Transverse colon (tissue), 4 donors: ENCODE measurements at regions of chr20 and their contacts with region 1.

Region 1: DNA sequence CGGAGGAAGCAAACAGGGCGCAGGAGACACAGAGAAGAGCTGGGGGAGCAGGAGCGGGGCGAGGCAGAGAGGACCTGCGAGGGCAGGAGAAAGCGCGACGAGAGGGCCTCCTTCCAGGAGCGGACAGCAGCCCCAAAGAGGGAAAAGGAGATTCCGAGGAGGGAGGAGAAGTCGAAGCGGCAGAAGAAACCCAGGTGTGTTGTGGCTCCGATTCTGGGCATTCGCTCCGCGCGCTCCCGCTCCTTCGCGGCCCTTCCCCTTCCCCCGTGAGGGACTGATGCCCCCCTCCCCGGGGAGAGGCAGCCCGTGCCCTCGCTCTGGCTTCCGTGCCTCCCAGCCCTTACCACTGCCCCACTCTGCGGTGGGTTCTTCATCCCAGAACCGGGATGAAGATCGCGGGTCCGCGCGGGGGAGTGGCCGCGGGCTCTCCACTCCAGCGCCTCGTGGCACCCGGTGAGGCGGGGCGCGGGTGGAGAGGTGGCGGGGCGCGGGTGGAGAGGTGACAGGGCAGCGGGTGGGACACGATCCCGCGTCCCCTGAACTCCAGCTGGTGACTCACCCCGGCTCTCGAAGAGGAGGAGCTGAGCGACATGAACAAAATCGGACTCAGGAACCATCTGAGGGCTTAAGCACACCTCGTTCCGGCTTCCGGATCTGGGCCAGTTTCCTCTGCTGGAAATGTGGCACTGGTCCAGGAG is 22.4 kb downstream of the TMC2 start:
- DNase-seq: no peak
- H3K4me3 ChIP-seq: peak overlapping the region in 3 of 4 donors; percentile 7 to 32 (median 31)
- H3K27ac ChIP-seq: no peak overlapping the region
- H3K4me1 ChIP-seq: peaks cover 0 to 10% (median 7%) of the 10 kb centered on the region in 4 donors
- H3K27me3 ChIP-seq: peaks cover 63% of the 10 kb centered on the region
- CTCF ChIP-seq: no peak
- EP300 ChIP-seq: no peak
- POLR2A ChIP-seq: no peak

Region 2: DNA sequence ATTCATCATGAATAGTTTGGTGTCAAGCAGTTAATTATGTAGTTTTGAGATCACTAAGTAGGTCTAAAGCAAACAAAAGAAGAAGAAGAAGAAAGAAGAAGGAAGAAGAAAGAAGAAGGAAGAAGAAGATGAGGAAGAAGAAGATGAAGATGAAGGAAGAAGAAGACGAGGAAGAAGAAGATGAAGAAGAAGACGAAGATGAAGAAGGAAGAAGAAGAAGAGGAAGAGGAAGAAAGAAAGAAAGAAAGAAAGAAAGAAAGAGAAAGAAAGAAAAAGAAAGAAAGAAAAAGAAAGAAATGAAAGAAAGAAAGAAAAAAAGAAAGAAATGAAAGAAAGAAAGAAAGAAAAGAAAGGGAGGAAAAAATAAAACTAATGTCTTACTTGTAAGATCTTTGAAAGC is 13.1 kb before region 1 on chr20:
- in situ Hi-C with region 1: no loop called
- intact Hi-C with region 1: loop called (anchors 1 kb)
- DNase-seq: no peak
- H3K4me3 ChIP-seq: no peak overlapping the region
- H3K27ac ChIP-seq: no peak overlapping the region
- H3K4me1 ChIP-seq: no peaks in the 10 kb centered on the region
- H3K27me3 ChIP-seq: peaks cover 10% of the 10 kb centered on the region
- CTCF ChIP-seq: no peak
- EP300 ChIP-seq: no peak
- POLR2A ChIP-seq: no peak